A673 (cell line): ENCODE measurements at regions of chr11 and their contacts with region 1.

Region 1: DNA sequence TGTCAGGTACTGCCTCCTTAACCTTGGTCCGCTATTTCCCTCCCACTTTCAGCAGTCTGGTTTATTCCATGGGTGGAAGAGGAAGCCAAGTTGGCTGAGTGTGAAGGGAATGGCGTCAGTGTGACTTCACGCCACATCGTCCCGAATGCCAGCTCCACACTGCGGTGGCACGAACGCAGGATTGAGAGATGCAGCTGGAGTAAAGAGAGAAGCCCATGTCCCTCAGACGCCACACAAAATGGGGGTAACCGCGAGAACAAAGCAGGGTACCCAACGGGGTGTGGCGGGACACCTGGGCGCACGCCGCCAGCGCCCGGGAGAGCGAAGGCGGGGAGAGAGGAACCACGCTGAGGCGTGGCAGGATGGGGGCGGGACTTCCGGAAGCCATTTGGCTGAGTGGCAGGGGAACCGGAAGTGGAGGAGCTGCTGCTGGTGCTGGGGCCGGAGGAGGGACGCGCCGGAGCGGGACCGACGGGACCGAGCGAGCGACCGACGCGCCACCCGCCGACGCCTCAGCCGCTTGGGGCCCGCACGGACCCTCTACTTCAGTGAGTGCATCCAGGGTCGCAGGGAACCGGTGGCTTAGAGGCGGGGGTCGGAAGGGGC is at the start of gene PAFAH1B2:
- DNase-seq: peak; percentile 98
- H3K4me3 ChIP-seq: peak within 1 kb of the TSS; percentile 97
- H3K27ac ChIP-seq: peak within 1 kb of the TSS; percentile 81
- H3K4me1 ChIP-seq: peaks cover 6% of the 10 kb centered on the region
- H3K27me3 ChIP-seq: no peaks in the 10 kb centered on the region
- CTCF ChIP-seq: no peak
- total RNA-seq, gene PAFAH1B2: 153 and 160 TPM in 2 replicates

Region 2: DNA sequence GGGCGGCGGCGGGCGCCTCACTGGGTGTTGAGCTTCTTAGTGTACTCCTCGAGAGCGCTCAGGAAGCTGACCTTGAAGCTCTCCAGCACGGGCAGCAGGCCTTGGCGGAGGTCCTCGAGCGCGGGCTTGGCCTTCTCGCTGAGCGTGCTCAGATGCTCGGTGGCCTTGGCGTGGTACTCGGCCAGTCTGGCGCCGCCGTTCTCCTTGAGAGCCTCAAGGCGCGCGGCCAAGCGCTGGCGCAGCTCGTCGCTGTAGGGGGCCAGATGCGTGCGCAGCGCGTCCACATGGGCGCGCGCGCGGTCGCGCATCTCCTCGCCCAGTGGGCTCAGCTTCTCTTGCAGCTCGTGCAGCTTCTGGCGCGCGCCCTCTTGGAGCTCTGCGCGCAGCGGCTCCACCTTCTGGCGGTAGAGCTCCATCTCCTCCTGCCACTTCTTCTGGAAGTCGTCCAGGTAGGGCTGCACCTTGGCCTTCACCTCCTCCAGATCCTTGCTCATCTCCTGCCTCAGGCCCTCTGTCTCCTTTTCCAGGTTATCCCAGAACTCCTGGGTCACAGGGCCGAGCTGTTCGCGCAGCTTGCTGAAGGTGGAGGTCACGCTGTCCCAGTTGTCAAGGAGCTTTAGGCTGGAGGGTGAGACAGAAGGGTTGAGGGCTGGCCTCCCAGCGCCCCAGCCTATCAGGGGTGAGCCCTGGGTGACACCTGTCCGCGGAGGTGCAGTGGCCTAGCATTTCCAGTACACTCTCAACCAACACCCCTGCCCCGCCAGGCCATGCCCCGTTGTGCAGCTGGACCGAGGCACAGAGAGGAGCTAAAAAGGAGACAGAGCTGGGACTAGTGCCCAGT is 308.0 kb before region 1 on chr11:
- CTCF ChIA-PET with region 1: interaction called, 19 read pairs
- POLR2A ChIA-PET with region 1: interaction called, 7 read pairs
- intact Hi-C with region 1: no loop called
- DNase-seq: peak; percentile 98
- H3K4me3 ChIP-seq: peak overlapping the region; percentile 42
- H3K27ac ChIP-seq: peak overlapping the region; percentile 5
- H3K4me1 ChIP-seq: peaks cover 6% of the 10 kb centered on the region
- H3K27me3 ChIP-seq: no peaks in the 10 kb centered on the region
- CTCF ChIP-seq: peak; percentile 95

Region 3: DNA sequence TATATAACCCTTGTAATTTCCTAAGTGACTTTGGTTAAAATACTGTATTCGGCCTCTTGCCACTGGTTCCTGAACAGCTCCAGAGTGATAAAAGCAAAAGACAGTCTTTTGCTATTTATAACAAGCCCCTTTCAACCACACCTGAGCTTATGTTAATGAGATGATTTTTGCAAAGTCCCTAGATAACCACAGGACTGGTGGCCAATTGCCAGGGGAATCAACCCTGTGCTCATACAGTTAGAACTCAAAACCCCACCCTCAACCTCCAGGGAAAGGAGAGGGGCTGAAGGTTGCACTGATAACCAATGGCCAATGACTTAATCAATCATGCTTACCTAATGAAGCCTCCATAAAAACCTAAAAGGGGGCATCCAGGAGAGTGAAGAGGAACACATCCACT is 123.7 kb before region 1 on chr11:
- CTCF ChIA-PET with region 1: no interaction called
- POLR2A ChIA-PET with region 1: interaction called, 18 read pairs
- intact Hi-C with region 1: no loop called
- DNase-seq: no peak
- H3K4me3 ChIP-seq: no peak overlapping the region
- H3K27ac ChIP-seq: peak overlapping the region; percentile 25
- H3K4me1 ChIP-seq: peaks cover 65% of the 10 kb centered on the region
- H3K27me3 ChIP-seq: no peaks in the 10 kb centered on the region
- CTCF ChIP-seq: no peak

Region 4: GRCh38 chr11:117127171-117127901 is 16.6 kb before region 1 on chr11:
- CTCF ChIA-PET with region 1: interaction called, 16 read pairs
- POLR2A ChIA-PET with region 1: no interaction called
- intact Hi-C with region 1: no loop called
- DNase-seq: no peak
- H3K4me3 ChIP-seq: no peak overlapping the region
- H3K27ac ChIP-seq: no peak overlapping the region
- H3K4me1 ChIP-seq: no peaks in the 10 kb centered on the region
- H3K27me3 ChIP-seq: no peaks in the 10 kb centered on the region
- CTCF ChIP-seq: no peak

Region 5: DNA sequence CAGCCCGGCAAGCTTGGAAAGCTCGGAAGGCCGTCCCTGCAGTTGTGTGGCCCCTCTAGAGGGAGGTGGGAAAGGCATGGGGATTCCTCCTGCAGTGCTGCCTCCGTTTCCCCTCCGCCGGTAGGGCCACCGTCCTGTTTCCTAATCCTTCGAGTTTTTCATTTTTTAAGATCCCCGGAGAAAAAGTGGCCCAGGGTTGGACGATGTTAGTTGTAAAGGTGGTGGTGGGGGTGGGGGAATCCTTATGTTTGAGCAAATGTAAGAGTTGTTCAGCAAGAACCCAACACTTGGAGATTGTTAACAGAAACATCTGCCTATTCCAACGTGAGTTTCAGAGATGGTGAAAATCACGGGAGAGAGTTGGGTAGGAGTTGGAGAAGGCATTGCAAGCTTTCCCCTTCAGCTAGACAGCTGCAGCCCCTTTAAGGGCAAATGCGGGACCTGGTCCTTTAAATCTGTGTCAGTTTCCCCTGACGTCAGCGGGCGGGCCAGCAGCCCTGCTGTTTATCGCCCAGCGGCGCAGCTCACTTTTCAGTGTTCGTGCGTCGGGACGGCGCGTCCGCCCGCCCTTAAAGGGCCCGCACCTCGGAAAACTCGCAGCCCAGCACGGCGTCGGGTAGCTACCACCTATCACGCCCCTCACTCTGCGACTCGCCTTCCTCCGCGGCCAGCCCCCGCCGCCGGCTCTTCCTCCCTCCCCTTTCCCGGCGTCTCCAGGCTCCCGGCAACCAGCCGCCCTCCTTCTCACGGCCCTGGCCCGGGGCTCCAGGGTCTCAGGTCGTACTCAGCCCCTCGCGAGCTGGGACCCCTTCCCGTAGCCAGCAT is 34.4 kb after region 1 on chr11 and contains the start of gene SIDT2:
- CTCF ChIA-PET with region 1: interaction called, 6 read pairs
- POLR2A ChIA-PET with region 1: no interaction called
- intact Hi-C with region 1: loop called (anchors 5 kb)
- DNase-seq: peak; percentile 98
- H3K4me3 ChIP-seq: peak within 1 kb of the TSS; percentile 70
- H3K27ac ChIP-seq: peak within 1 kb of the TSS; percentile 81
- H3K4me1 ChIP-seq: peaks cover 29% of the 10 kb centered on the region
- H3K27me3 ChIP-seq: no peaks in the 10 kb centered on the region
- CTCF ChIP-seq: no peak
- total RNA-seq, gene SIDT2: 33.5 and 43.6 TPM in 2 replicates